CD4-positive, alpha-beta T cell (primary cell): ENCODE measurements at regions of chr14 and their contacts with region 1.

Region 1: GRCh38 chr14:56579345-56580220 is at the start of gene TMEM260:
- DNase-seq: peak; percentile 84 to 95 (median 92)
- ATAC-seq: peak; percentile 92
- H3K4me3 ChIP-seq: peak within 1 kb of the TSS; percentile 72
- H3K4me3 Mint-ChIP-seq: peak within 1 kb of the TSS; percentile 89
- H3K27ac ChIP-seq: peak within 1 kb of the TSS; percentile 71 to 75
- H3K27ac Mint-ChIP-seq: peak within 1 kb of the TSS; percentile 67
- H3K4me1 ChIP-seq: peaks cover 12% of the 10 kb centered on the region
- H3K4me1 Mint-ChIP-seq: peaks cover 48% of the 10 kb centered on the region
- H3K27me3 ChIP-seq: no peaks in the 10 kb centered on the region
- H3K27me3 Mint-ChIP-seq: peaks cover 2% of the 10 kb centered on the region
- CTCF ChIP-seq: peak; percentile 91
- total RNA-seq, gene TMEM260: 8.7 to 9.2 TPM

Region 2: GRCh38 chr14:55191203-55192053 is 1388.2 kb before region 1 on chr14 and contains the start of gene DLGAP5:
- CTCF ChIA-PET with region 1: no interaction called
- POLR2A ChIA-PET with region 1: no interaction called
- intact Hi-C with region 1: loop called in 1 of 2 experiments (anchors 10 kb)
- DNase-seq: peak; percentile 71 to 96 (median 80)
- ATAC-seq: peak; percentile 98
- H3K4me3 ChIP-seq: peak within 1 kb of the TSS; percentile 74
- H3K4me3 Mint-ChIP-seq: peak within 1 kb of the TSS; percentile 90
- H3K27ac ChIP-seq: peak within 1 kb of the TSS in 1 of 2 donors; percentile 40
- H3K27ac Mint-ChIP-seq: peak within 1 kb of the TSS; percentile 14
- H3K4me1 ChIP-seq: peaks cover 14% of the 10 kb centered on the region
- H3K4me1 Mint-ChIP-seq: peaks cover 21% of the 10 kb centered on the region
- H3K27me3 ChIP-seq: no peaks in the 10 kb centered on the region
- H3K27me3 Mint-ChIP-seq: no peaks in the 10 kb centered on the region
- CTCF ChIP-seq: no peak
- total RNA-seq, gene DLGAP5: 0.25 TPM in 1 of 2 experiments, not detected in the other

Region 3: GRCh38 chr14:55752586-55753390 is 826.8 kb before region 1 on chr14:
- CTCF ChIA-PET with region 1: no interaction called
- POLR2A ChIA-PET with region 1: no interaction called
- intact Hi-C with region 1: no loop called
- DNase-seq: no peak
- ATAC-seq: no peak
- H3K4me3 ChIP-seq: no peak overlapping the region
- H3K4me3 Mint-ChIP-seq: no peak overlapping the region
- H3K27ac ChIP-seq: no peak overlapping the region
- H3K27ac Mint-ChIP-seq: no peak overlapping the region
- H3K4me1 ChIP-seq: no peaks in the 10 kb centered on the region
- H3K4me1 Mint-ChIP-seq: no peaks in the 10 kb centered on the region
- H3K27me3 ChIP-seq: no peaks in the 10 kb centered on the region
- H3K27me3 Mint-ChIP-seq: no peaks in the 10 kb centered on the region
- CTCF ChIP-seq: no peak

Region 4: GRCh38 chr14:56590535-56590960 is 11.0 kb after region 1 on chr14:
- CTCF ChIA-PET with region 1: interaction called, 12 read pairs
- POLR2A ChIA-PET with region 1: interaction called, 12 read pairs
- intact Hi-C with region 1: no loop called
- DNase-seq: no peak
- ATAC-seq: no peak
- H3K4me3 ChIP-seq: no peak overlapping the region
- H3K4me3 Mint-ChIP-seq: no peak overlapping the region
- H3K27ac ChIP-seq: no peak overlapping the region
- H3K27ac Mint-ChIP-seq: no peak overlapping the region
- H3K4me1 ChIP-seq: no peaks in the 10 kb centered on the region
- H3K4me1 Mint-ChIP-seq: no peaks in the 10 kb centered on the region
- H3K27me3 ChIP-seq: no peaks in the 10 kb centered on the region
- H3K27me3 Mint-ChIP-seq: no peaks in the 10 kb centered on the region
- CTCF ChIP-seq: no peak

Region 5: GRCh38 chr14:57268161-57269069 is 688.8 kb after region 1 on chr14 and contains the starts of genes AP5M1 and EXOC5:
- CTCF ChIA-PET with region 1: no interaction called
- POLR2A ChIA-PET with region 1: interaction called, 21 read pairs
- intact Hi-C with region 1: loop called (anchors 5 to 10 kb)
- DNase-seq: peak; percentile 81 to 97 (median 89)
- ATAC-seq: peak; percentile 84
- H3K4me3 ChIP-seq: peak within 1 kb of the TSS; percentile 76
- H3K4me3 Mint-ChIP-seq: peak within 1 kb of the TSS; percentile 99
- H3K27ac ChIP-seq: peak within 1 kb of the TSS; percentile 91
- H3K27ac Mint-ChIP-seq: peak within 1 kb of the TSS; percentile 99
- H3K4me1 ChIP-seq: peaks cover 17% of the 10 kb centered on the region
- H3K4me1 Mint-ChIP-seq: peaks cover 87% of the 10 kb centered on the region
- H3K27me3 ChIP-seq: no peaks in the 10 kb centered on the region
- H3K27me3 Mint-ChIP-seq: no peaks in the 10 kb centered on the region
- CTCF ChIP-seq: no peak
- total RNA-seq, gene AP5M1: 39.2 to 40.4 TPM
- total RNA-seq, gene EXOC5: 17.1 to 18.1 TPM

Region 6: GRCh38 chr14:57390028-57390805 is 810.6 kb after region 1 on chr14 and contains the start of gene NAA30:
- CTCF ChIA-PET with region 1: no interaction called
- POLR2A ChIA-PET with region 1: interaction called, 16 read pairs
- intact Hi-C with region 1: loop called in 1 of 2 experiments (anchors 2 kb)
- DNase-seq: peak; percentile 80 to 98 (median 90)
- ATAC-seq: peak; percentile 91
- H3K4me3 ChIP-seq: peak within 1 kb of the TSS; percentile 91
- H3K4me3 Mint-ChIP-seq: peak within 1 kb of the TSS; percentile 94
- H3K27ac ChIP-seq: peak within 1 kb of the TSS; percentile 75 to 89
- H3K27ac Mint-ChIP-seq: peak within 1 kb of the TSS; percentile 93
- H3K4me1 ChIP-seq: peaks cover 19% of the 10 kb centered on the region
- H3K4me1 Mint-ChIP-seq: peaks cover 53% of the 10 kb centered on the region
- H3K27me3 ChIP-seq: no peaks in the 10 kb centered on the region
- H3K27me3 Mint-ChIP-seq: no peaks in the 10 kb centered on the region
- CTCF ChIP-seq: no peak
- total RNA-seq, gene NAA30: 25.8 to 27.7 TPM